ENCODE measurements at regions of chr9 and their contacts with region 1.

Region 1: GRCh38 chr9:69199769-69200470 is 25.8 kb downstream of the TJP2 start:
- DNase-seq: peak in 1 of 5 donors; percentile 50
- ATAC-seq: peak in 3 of 4 donors; percentile 27 to 72 (median 54)
- H3K4me3 ChIP-seq: no peak overlapping the region
- H3K27ac ChIP-seq: peak overlapping the region in 1 of 12 donors; percentile 62
- H3K4me1 ChIP-seq: peaks cover 0 to 58% (median 32%) of the 10 kb centered on the region in 12 donors
- H3K27me3 ChIP-seq: no peaks in the 10 kb centered on the region
- CTCF ChIP-seq: peak in 1 of 12 donors; percentile 9
- POLR2A ChIP-seq: no peak

Region 2: GRCh38 chr9:69035438-69036308 is 164.2 kb before region 1 on chr9 and contains the start of gene FXN:
- intact Hi-C with region 1: loop called in 1 of 10 experiments (anchors 5 kb)
- DNase-seq: peak; percentile 82 to 93 (median 87)
- ATAC-seq: peak; percentile 81 to 97 (median 94)
- H3K4me3 ChIP-seq: peak within 1 kb of the TSS; percentile 46 to 94 (median 78)
- H3K27ac ChIP-seq: peak within 1 kb of the TSS; percentile 28 to 95 (median 87)
- H3K4me1 ChIP-seq: peaks cover 0 to 14% (median 7%) of the 10 kb centered on the region in 12 donors
- H3K27me3 ChIP-seq: no peaks in the 10 kb centered on the region
- CTCF ChIP-seq: peak; percentile 97 to 100 (median 99)
- POLR2A ChIP-seq: peak in 1 of 2 donors; percentile 56
- total RNA-seq, gene FXN: 16.9 to 40.2 (median 30.0) TPM

Region 3: DNA sequence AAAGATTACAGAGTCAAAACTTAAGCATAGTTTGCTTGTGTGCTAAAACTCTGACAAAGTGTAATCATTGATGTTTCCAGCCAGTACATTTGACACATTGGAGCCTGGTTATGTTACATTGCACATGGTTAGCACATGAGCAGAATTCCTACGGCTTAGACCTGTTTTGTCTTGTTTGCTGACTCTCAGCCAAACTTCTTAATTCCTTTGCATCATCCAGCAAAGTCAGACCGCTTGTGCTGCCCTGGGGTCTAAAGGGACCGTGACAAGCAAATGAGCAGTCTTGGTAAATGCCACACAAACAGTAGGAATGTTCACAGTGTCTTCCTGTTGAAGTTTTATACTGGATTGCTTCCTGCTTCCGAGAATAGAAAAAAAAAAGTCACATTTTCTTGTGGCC is 53.1 kb after region 1 on chr9:
- intact Hi-C with region 1: no loop called
- DNase-seq: no peak
- ATAC-seq: peak in 3 of 4 donors; percentile 18 to 32 (median 30)
- H3K4me3 ChIP-seq: no peak overlapping the region
- H3K27ac ChIP-seq: peak overlapping the region in 9 of 12 donors; percentile 3 to 59 (median 47)
- H3K4me1 ChIP-seq: peaks cover 0 to 18% (median 6%) of the 10 kb centered on the region in 12 donors
- H3K27me3 ChIP-seq: no peaks in the 10 kb centered on the region
- CTCF ChIP-seq: no peak
- POLR2A ChIP-seq: no peak

Region 4: GRCh38 chr9:69885474-69885929 is 685.6 kb after region 1 on chr9:
- intact Hi-C with region 1: no loop called
- DNase-seq: no peak
- ATAC-seq: no peak
- H3K4me3 ChIP-seq: no peak overlapping the region
- H3K27ac ChIP-seq: no peak overlapping the region
- H3K4me1 ChIP-seq: peaks cover 0 to 6% (median 0%) of the 10 kb centered on the region in 12 donors
- H3K27me3 ChIP-seq: no peaks in the 10 kb centered on the region
- CTCF ChIP-seq: no peak
- POLR2A ChIP-seq: no peak